ENCODE measurements at regions of chr11 and their contacts with region 1.

Region 1: GRCh38 chr11:72238040-72238450 is 5.9 kb downstream of the PHOX2A start:
- DNase-seq: peak in 1 of 2 donors; percentile 78
- ATAC-seq: peak; percentile 21 to 67 (median 43)
- H3K4me3 ChIP-seq: no peak overlapping the region
- H3K27ac ChIP-seq: no peak overlapping the region
- H3K4me1 ChIP-seq: peaks cover 10% of the 10 kb centered on the region
- H3K27me3 ChIP-seq: peaks cover 0 to 16% (median 6%) of the 10 kb centered on the region in 3 donors
- CTCF ChIP-seq: peak; percentile 53

Region 2: DNA sequence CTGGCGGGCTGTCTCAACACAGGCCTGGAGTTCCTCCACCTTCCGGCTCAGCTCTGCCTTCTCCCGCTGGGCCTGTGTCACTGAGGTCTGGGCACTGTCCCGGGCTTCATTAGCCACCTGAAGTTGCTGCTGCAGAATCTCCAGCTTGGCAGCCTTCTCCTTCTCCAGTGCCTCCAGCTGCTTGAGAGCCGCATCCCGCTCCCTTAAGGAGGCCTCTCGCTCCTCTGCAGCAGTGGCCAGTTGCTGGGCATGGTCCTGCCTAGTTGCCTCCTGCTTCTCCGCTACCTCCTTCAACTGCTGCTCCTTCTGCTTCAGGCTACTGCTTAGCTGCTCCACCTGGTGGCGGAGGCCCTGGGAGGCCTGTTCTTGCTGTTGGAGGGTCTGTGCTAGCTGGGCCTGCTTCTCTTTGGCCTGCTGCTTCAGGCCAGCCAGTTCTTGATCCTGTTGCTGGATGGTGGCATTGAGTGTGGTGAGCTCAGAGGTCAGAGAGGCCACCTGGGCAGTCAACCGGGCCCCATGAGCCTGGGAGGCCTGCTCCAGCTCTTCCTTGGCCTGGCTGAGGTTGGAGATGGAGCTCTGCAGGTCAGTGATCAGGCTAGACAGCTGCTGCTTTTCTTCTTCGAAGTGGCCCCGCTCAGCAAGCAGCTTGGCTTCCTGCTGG is 222.4 kb before region 1 on chr11:
- intact Hi-C with region 1: loop called (anchors 10 kb)
- DNase-seq: no peak
- ATAC-seq: no peak
- H3K4me3 ChIP-seq: no peak overlapping the region
- H3K27ac ChIP-seq: peak overlapping the region; percentile 34
- H3K4me1 ChIP-seq: peaks cover 43% of the 10 kb centered on the region
- H3K27me3 ChIP-seq: no peaks in the 10 kb centered on the region
- CTCF ChIP-seq: peak; percentile 17

Region 3: DNA sequence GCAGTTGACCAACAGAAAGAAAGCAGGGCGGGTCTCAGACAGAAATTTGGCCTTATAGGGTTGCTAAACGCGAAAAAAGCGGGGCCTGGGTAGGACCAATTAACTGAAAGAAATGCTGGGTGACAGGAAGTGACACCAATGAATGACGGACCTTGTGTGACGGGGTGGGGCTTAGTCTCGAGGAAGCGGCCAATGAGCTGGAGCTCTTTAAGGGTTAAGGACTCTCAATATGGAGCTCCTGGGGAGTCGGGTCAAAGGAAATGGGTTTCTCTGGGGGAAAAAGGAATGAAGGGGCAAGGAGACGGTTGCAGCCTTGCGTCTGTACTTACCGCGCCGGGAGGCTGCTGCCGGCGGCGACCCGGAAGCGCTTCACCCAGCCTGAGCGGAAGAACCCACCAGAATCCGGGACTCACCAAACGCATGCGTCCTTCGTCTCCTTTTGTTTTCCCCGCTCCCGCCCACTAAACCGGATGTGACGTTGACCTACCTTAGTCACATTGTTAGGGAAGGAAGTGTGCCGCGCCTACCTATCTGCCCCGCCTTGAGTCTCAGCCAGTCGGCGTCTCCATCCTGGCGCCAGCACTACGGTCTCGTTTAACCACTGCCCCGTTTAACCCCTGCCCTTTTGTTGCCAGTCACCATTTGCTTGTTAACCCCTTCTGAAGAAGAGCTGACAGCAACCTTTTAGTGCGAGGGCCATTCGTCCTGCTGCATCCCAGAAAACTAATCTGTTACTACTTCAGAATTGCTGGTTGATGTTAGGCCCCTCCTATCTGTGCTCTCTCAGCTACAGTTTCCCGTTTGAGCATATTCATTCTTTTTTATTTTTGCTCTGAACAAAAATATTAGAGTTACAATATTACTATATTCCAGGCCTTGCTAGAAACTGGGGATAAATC is 125.5 kb before region 1 on chr11 and contains the start of gene ANAPC15:
- intact Hi-C with region 1: loop called in 1 of 2 experiments (anchors 10 kb)
- DNase-seq: peak; percentile 97 to 98
- ATAC-seq: peak; percentile 92 to 94 (median 93)
- H3K4me3 ChIP-seq: peak within 1 kb of the TSS; percentile 80
- H3K27ac ChIP-seq: peak within 1 kb of the TSS; percentile 88
- H3K4me1 ChIP-seq: peaks cover 4% of the 10 kb centered on the region
- H3K27me3 ChIP-seq: no peaks in the 10 kb centered on the region
- CTCF ChIP-seq: no peak
- total RNA-seq, gene ANAPC15: 32.7 to 45.7 (median 37.1) TPM

Region 4: DNA sequence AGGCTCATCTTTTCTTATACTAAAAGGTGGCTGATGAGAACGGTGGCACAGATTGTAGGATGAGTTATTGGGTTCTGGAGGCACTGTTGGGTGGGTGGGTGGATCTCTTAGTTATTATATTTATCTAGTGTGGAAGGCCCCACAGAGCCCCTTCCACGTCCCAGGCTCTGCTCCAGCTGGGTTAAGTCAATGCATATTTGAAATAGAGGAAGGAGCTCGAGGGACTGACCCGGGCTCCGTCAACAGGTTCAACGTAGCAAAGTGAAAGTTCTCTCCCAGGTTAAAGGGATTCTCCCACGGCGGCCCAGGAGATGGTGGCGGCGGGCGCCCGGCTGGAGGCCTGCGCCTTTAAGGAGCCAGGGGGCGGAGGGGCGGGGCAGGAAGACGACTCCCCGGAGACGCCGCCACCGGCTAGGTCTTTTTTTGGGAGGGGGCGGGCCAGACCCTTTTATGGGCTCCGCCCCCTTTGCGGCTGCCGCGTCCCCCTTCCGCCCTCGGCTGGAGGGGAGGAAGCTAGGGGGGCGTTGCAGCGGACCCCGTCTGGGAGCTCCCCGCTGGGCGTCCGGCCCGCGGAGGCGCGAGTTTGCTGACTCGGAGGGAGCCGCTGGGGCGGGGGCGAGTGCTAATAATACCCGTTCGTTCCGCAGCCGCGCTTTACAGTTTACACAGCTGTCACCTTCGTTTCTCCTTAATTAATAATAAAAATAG is 15.0 kb before region 1 on chr11:
- intact Hi-C with region 1: loop called in 1 of 2 experiments (anchors 1 kb)
- DNase-seq: peak; percentile 95 to 96
- ATAC-seq: peak; percentile 90 to 92 (median 90)
- H3K4me3 ChIP-seq: peak overlapping the region; percentile 72
- H3K27ac ChIP-seq: peak overlapping the region; percentile 94
- H3K4me1 ChIP-seq: peaks cover 16% of the 10 kb centered on the region
- H3K27me3 ChIP-seq: no peaks in the 10 kb centered on the region
- CTCF ChIP-seq: no peak

Region 5: DNA sequence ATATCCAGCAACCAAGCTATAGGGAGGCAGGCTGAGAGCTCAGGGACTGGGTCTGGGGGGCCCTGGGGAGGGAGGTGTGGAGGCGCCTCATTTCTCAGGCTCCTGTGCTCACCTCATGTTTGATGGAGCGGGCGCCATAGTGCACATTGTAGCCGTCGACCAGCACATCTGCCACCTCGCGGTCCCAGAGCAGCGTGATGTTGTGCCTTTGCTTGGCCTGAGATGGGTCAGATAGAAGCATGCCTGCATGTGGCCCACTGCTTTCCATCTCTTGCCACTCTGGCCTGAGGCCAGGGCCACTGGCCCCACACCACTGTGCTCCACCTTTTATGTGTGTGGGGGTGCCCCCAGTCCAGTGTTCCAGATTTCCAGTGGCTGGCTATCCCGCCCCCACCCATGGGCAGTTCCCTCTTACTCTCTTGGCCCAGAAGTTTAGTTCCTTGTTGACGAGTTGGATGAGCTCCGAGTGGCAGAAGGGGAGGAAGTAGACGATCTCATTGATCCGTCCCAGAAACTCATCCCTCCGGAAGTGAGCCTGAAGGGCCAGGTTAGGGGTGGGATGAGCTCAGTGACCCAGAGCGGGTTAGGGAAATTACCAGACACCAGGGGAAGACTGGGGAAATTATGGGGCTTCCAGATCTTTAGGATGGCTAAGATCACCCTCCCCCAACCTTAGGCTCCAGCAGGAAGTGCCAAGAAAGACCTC is 56.0 kb after region 1 on chr11:
- intact Hi-C with region 1: no loop called
- DNase-seq: no peak
- ATAC-seq: no peak
- H3K4me3 ChIP-seq: no peak overlapping the region
- H3K27ac ChIP-seq: no peak overlapping the region
- H3K4me1 ChIP-seq: no peaks in the 10 kb centered on the region
- H3K27me3 ChIP-seq: no peaks in the 10 kb centered on the region
- CTCF ChIP-seq: no peak

Region 6: GRCh38 chr11:72425053-72425980 is 187.3 kb after region 1 on chr11:
- intact Hi-C with region 1: loop called (anchors 5 to 10 kb)
- DNase-seq: peak in 1 of 2 donors; percentile 60
- ATAC-seq: peak; percentile 71 to 95 (median 82)
- H3K4me3 ChIP-seq: no peak overlapping the region
- H3K27ac ChIP-seq: peak overlapping the region; percentile 30
- H3K4me1 ChIP-seq: peaks cover 45% of the 10 kb centered on the region
- H3K27me3 ChIP-seq: no peaks in the 10 kb centered on the region
- CTCF ChIP-seq: no peak

Region 7: GRCh38 chr11:72430741-72431570 is 192.9 kb after region 1 on chr11:
- intact Hi-C with region 1: loop called (anchors 5 to 10 kb)
- DNase-seq: no peak
- ATAC-seq: no peak
- H3K4me3 ChIP-seq: no peak overlapping the region
- H3K27ac ChIP-seq: no peak overlapping the region
- H3K4me1 ChIP-seq: peaks cover 22% of the 10 kb centered on the region
- H3K27me3 ChIP-seq: no peaks in the 10 kb centered on the region
- CTCF ChIP-seq: peak; percentile 76